Panc1 (cell line): ENCODE measurements at regions of chr6 and their contacts with region 1.

Region 1: GRCh38 chr6:17599885-17600526 is at the start of gene FAM8A1:
- DNase-seq: peak; percentile 55
- ATAC-seq: peak; percentile 95
- H3K4me3 ChIP-seq: peak within 1 kb of the TSS; percentile 61 to 75
- H3K27ac ChIP-seq: peak within 1 kb of the TSS; percentile 91
- H3K4me1 ChIP-seq: peaks cover 4% of the 10 kb centered on the region; the same call in 1 of the 2 replicates
- H3K27me3 ChIP-seq: no peaks in the 10 kb centered on the region
- CTCF ChIP-seq: 0 out of 2 replicates have a peak, but pooled peaks have one; percentile 4
- total RNA-seq, gene FAM8A1: 9.3 TPM

Region 2: GRCh38 chr6:17473554-17473953 is 126.5 kb before region 1 on chr6:
- CTCF ChIA-PET with region 1: interaction called, 3 read pairs
- POLR2A ChIA-PET with region 1: interaction called, 16 read pairs
- in situ Hi-C with region 1: no loop called
- intact Hi-C with region 1: no loop called
- DNase-seq: no peak
- ATAC-seq: no peak
- H3K4me3 ChIP-seq: no peak overlapping the region
- H3K27ac ChIP-seq: no peak overlapping the region
- H3K4me1 ChIP-seq: peaks cover 13% of the 10 kb centered on the region; the same call in 1 of the 2 replicates
- H3K27me3 ChIP-seq: no peaks in the 10 kb centered on the region
- CTCF ChIP-seq: no peak

Region 3: GRCh38 chr6:17741507-17741906 is 141.5 kb after region 1 on chr6:
- CTCF ChIA-PET with region 1: no interaction called
- POLR2A ChIA-PET with region 1: interaction called, 14 read pairs
- in situ Hi-C with region 1: no loop called
- intact Hi-C with region 1: no loop called
- DNase-seq: no peak
- ATAC-seq: peak; percentile 40; the same call in 1 of the 2 replicates
- H3K4me3 ChIP-seq: no peak overlapping the region
- H3K27ac ChIP-seq: no peak overlapping the region
- H3K4me1 ChIP-seq: no peaks in the 10 kb centered on the region
- H3K27me3 ChIP-seq: no peaks in the 10 kb centered on the region
- CTCF ChIP-seq: no peak

Region 4: DNA sequence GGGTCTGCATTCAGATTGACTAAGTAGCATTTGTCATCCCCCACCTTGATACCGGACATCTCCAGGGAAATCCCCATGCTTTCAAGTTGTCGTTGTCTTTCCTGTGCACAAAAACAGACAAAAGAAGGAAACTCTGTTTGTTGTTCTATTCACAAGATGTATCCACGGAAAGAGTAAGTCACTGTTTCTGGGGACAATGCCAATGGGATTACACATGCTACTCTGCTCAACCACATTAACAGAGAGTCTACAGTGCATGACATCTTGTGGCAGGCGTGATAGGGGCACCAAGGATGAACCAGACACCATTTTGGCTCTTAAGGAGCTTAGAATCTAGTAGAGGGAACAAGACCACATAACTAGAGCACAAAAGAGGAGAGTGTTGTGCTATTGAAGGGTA is 231.1 kb after region 1 on chr6:
- CTCF ChIA-PET with region 1: no interaction called
- POLR2A ChIA-PET with region 1: interaction called, 14 read pairs
- in situ Hi-C with region 1: no loop called
- intact Hi-C with region 1: no loop called
- DNase-seq: no peak
- ATAC-seq: no peak
- H3K4me3 ChIP-seq: no peak overlapping the region
- H3K27ac ChIP-seq: no peak overlapping the region
- H3K4me1 ChIP-seq: no peaks in the 10 kb centered on the region
- H3K27me3 ChIP-seq: no peaks in the 10 kb centered on the region
- CTCF ChIP-seq: no peak